GM10248 (cell line): ENCODE measurements at regions of chr4 and their contacts with region 1.

Region 1: DNA sequence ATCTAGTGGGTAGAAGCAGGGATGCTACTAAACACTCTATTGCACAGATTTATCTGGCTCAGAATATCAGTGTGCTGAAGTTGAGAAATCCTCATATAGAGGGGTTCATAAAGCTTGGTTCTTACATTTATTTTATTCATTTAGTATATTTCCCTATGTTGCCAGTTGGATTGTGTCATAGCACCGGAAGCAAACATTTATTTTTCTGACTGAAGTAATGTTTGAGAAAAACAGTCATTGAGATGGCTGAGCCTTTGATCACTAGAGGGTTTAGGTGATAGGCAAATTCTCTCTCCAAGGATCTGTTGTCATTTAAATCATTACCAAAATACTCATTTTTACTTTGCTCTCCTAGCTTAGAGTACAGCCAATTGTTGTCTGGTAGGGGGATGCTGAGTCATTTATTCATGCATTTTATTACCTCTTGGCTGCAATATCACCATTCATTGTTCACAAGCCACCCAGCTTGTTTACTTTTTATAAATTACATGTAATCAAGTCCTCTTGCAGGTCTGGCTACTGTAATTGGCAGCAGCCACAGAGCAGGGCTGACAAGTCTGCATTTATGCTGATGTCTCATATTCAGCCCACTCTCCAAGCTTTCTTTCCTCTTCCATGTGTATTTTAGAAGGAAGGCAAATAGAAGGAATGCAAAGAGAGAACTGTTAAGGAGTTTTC is 15.2 kb downstream of the GAB1 start:
- DNase-seq: no peak
- CTCF ChIP-seq: no peak

Region 2: GRCh38 chr4:143337600-143338287 is 14.2 kb before region 1 on chr4:
- CTCF ChIA-PET with region 1: interaction called, 40 read pairs
- POLR2A ChIA-PET with region 1: interaction called, 4 read pairs
- DNase-seq: no peak
- CTCF ChIP-seq: no peak

Region 3: DNA sequence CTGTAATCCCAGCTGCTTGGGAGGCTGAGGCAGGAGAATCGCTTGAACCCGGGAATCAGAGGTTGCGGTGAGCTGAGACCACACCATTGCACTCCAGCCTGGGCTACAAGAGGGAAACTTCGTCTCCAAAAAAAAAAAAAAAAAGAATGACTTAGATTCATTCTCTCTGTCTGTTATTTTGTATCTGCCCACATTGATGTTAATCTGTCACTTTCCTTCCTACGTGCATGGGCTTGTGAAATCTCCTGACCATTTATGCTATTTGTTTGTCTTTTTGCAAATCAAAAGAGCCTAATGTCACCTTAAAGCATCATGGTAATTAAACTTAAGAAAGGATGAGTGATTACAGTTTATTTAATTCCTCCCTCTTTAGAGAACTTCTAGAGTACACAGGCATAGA is 12.2 kb after region 1 on chr4:
- CTCF ChIA-PET with region 1: no interaction called
- POLR2A ChIA-PET with region 1: no interaction called
- DNase-seq: no peak
- CTCF ChIP-seq: no peak